ENCODE measurements at regions of chr15 and their contacts with region 1.

Region 1: DNA sequence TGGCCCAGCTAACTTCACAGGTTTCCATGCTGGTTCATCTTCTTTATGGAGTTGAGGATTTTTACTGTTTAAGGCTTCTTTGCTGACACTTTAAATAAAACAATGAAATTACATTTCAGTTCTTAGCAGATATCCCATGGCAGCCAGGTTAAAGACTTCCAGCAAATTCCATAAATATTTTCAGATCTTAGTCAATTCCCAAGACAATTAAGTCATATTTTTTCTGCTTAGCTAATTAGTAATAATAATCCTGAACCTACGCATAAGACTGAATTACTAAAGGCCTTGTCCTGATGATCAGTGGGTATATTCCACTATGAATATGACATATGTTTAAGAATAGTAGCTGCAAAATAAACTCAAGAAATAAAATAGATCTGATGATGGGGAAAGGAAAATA is 83.3 kb downstream of the NR2E3 start:
- DNase-seq: no peak
- H3K4me3 ChIP-seq: no peak overlapping the region
- H3K27ac ChIP-seq: no peak overlapping the region
- H3K4me1 ChIP-seq: peaks cover 4 to 9% of the 10 kb centered on the region in 2 experiments; a peak in 3 of 4 replicates
- H3K27me3 ChIP-seq: no peaks in the 10 kb centered on the region
- CTCF ChIP-seq: no peak
- EP300 ChIP-seq: no peak
- RAD21 ChIP-seq: no peak

Region 2: DNA sequence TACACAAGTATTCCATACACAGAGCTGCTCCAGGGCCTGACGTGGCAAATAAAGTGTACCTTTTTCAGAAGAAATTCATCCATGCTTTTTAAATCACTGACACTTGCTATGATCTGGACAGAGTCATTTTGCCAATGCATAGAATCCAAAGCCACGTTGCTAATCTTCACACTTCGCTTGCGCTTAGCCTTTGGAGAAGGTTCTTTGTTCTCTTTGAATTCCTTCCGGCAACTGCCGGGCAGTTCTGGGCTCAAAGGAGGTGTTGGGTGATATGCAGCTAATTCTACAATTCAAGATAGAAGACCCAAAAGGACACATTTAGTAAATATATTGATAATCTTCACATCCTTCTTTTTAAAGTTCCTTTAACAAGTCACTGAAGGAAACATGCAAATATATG is 13.4 kb before region 1 on chr15:
- CTCF ChIA-PET with region 1: interaction called, 14 read pairs
- POLR2A ChIA-PET with region 1: no interaction called
- DNase-seq: no peak
- H3K4me3 ChIP-seq: no peak overlapping the region
- H3K27ac ChIP-seq: no peak overlapping the region
- H3K4me1 ChIP-seq: no peaks in the 10 kb centered on the region
- H3K27me3 ChIP-seq: no peaks in the 10 kb centered on the region
- CTCF ChIP-seq: no peak
- EP300 ChIP-seq: no peak
- RAD21 ChIP-seq: no peak

Measured in SK-N-SH (cell line).